ENCODE measurements at regions of chr5 and their contacts with region 1.

Region 1: DNA sequence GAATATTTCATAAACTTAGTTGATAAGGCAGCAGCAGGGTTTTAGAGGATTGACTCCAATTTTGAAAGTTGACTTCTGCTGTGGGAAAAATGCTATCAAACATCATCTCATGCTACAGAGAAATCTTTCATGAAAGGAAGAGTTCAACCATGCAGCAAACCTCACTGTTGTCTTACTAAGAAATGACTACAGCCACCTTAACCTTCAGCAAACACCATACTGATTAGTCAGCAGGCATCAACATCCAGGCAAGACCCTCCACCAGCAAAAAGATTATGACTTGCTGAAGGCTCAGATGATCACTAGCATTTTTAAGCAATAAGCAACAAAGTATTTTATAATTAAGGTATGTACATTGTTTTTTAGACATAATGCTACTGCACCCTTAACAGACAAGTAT is 7.6 kb downstream of the TMEM174 start:
- DNase-seq: no peak
- H3K4me3 ChIP-seq: no peak overlapping the region
- H3K27ac ChIP-seq: no peak overlapping the region
- H3K4me1 ChIP-seq: peaks cover 0 to 3% (median 0%) of the 10 kb centered on the region in 4 experiments; a peak in 1 of 7 replicates
- H3K27me3 ChIP-seq: no peaks in the 10 kb centered on the region
- CTCF ChIP-seq: no peak
- EP300 ChIP-seq: no peak
- POLR2A ChIP-seq: no peak
- RAD21 ChIP-seq: no peak

Region 2: GRCh38 chr5:73136055-73136562 is 44.5 kb before region 1 on chr5:
- CTCF ChIA-PET with region 1: no interaction called
- POLR2A ChIA-PET with region 1: no interaction called
- DNase-seq: peak in 1 of 2 experiments; percentile 61
- H3K4me3 ChIP-seq: no peak overlapping the region
- H3K27ac ChIP-seq: no peak overlapping the region
- H3K4me1 ChIP-seq: peaks cover 0 to 10% (median 3%) of the 10 kb centered on the region in 4 experiments; a peak in 3 of 7 replicates
- H3K27me3 ChIP-seq: no peaks in the 10 kb centered on the region; a peak in 1 of 7 replicates
- CTCF ChIP-seq: no peak
- EP300 ChIP-seq: no peak
- POLR2A ChIP-seq: no peak
- RAD21 ChIP-seq: no peak

Region 3: DNA sequence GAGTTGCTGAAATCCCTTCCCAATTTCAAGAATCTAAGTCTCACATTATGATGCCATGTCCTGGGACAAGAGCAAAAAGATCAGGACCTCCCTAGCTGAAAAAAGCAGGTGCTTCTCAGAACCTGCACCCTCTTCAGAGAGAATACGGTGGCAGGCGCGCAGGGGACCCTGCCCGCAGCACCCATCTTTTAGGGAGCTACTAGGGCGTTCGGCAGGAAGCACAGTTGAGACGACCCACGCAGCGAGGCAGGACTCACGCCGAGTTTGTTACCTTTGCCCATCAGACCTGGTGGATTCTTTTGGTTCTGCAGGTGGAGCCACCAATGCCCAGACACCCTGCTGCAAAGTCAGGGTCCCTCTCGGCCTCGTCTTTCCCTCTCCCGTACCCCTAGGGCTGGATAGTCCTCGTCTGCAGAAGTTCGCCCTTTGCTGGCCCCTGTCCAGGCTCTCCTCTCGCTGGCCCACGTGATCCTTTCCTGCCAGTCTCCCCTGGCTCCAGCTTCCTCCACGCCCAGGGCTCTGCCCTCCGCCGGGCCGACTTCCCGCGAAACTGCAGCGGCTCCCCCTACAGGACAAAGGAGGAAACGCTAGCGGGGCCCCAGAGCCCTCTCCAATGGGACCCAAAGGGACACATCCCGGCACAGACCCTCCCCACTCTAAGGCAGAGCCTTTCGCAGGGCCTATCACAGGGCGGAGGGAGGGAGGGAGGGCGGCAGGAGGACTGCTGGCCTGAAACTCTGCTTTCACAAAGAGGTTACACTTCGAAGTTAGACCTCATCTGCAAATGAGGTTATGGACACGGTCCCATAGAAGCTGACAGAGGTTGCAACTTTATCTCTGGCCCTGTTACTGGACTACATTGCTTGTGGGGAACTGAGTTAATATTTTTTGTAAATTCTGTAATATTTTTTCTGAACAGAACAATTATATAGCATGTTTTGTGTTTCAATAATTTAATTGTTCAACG is 21.3 kb after region 1 on chr5:
- CTCF ChIA-PET with region 1: interaction called, 17 read pairs
- POLR2A ChIA-PET with region 1: no interaction called
- DNase-seq: peak; percentile 91 to 99
- H3K4me3 ChIP-seq: no peak overlapping the region
- H3K27ac ChIP-seq: no peak overlapping the region
- H3K4me1 ChIP-seq: peaks cover 0 to 4% (median 2%) of the 10 kb centered on the region in 4 experiments; a peak in 3 of 7 replicates
- H3K27me3 ChIP-seq: peaks cover 0 to 8% (median 5%) of the 10 kb centered on the region in 4 experiments; a peak in 3 of 7 replicates
- CTCF ChIP-seq: peak; percentile 80 to 91 (median 84)
- EP300 ChIP-seq: 0 out of 3 replicates have a peak, but pooled peaks of 1 of the 2 experiments have one; percentile 40
- POLR2A ChIP-seq: no peak
- RAD21 ChIP-seq: peak; percentile 78 to 87

Measured in H1 (cell line).